ENCODE measurements at regions of chr12 and their contacts with region 1.

Region 1: DNA sequence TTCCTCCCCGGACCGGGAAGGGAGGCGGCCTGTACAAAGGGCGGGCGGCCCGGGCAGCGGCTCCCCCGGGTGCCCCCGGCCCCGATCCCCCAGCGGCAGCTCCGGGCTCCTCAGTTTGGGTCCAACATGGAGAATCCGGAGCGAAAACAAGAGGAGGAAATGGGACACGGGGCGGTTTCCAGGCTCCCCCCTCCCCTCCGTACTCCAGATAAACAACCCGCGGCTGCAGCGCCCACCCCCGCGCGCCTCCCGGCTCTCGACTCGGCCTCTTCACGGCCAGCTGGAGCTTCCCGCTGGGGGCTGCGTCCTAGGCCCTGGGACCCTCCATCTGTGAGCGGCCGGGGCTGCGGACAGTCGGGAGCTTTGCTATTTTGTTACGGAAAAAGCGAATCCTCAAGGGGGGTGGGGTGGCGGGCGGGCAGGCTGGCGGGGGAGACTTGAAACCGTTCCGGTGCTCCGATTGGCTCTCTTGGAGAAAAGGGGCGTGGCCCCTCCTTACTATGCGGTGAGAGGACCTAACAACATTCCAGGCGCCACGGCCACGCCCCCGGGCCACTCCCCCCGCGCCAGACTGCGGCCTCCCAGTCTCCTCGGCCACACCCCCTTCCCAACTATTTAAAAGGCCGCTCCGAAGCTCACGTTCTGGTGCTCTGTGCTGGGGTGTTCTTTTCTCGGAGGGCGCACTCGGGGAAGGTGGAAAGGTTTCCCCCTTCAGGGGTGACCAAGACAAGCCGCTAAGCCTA is at the start of gene CTDSP2:
- DNase-seq: peak; percentile 91
- ATAC-seq: peak; percentile 70
- H3K4me3 ChIP-seq: peak within 1 kb of the TSS; percentile 48 to 98 (median 93)
- H3K4me3 Mint-ChIP-seq: peak within 1 kb of the TSS; percentile 84
- H3K27ac ChIP-seq: peak within 1 kb of the TSS; percentile 75 to 84
- H3K27ac Mint-ChIP-seq: peak within 1 kb of the TSS; percentile 90
- H3K4me1 ChIP-seq: peaks cover 43 to 52% of the 10 kb centered on the region in 2 donors
- H3K4me1 Mint-ChIP-seq: peaks cover 47% of the 10 kb centered on the region
- H3K27me3 ChIP-seq: peaks cover 0 to 7% (median 1%) of the 10 kb centered on the region in 4 experiments
- H3K27me3 Mint-ChIP-seq: peaks cover 9% of the 10 kb centered on the region
- CTCF ChIP-seq: no peak
- total RNA-seq, gene CTDSP2: 203 and 209 TPM in 2 replicates

Region 2: GRCh38 chr12:57771708-57772428 is 74.9 kb before region 1 on chr12 and contains the start of gene METTL1:
- CTCF ChIA-PET with region 1: no interaction called
- POLR2A ChIA-PET with region 1: no interaction called
- intact Hi-C with region 1: loop called (anchors 1 kb)
- DNase-seq: peak; percentile 94
- ATAC-seq: peak; percentile 91
- H3K4me3 ChIP-seq: peak within 1 kb of the TSS; percentile 70 to 96 (median 91)
- H3K4me3 Mint-ChIP-seq: peak within 1 kb of the TSS; percentile 96
- H3K27ac ChIP-seq: peak within 1 kb of the TSS; percentile 59 to 81
- H3K27ac Mint-ChIP-seq: peak within 1 kb of the TSS; percentile 91
- H3K4me1 ChIP-seq: peaks cover 15 to 24% of the 10 kb centered on the region in 2 donors
- H3K4me1 Mint-ChIP-seq: peaks cover 16% of the 10 kb centered on the region
- H3K27me3 ChIP-seq: peaks cover 0 to 9% (median 7%) of the 10 kb centered on the region in 4 experiments
- H3K27me3 Mint-ChIP-seq: no peaks in the 10 kb centered on the region
- CTCF ChIP-seq: no peak
- total RNA-seq, gene METTL1: 8.5 and 9.2 TPM in 2 replicates

Region 3: GRCh38 chr12:57782608-57783465 is 63.9 kb before region 1 on chr12 and contains the start of gene TSFM:
- CTCF ChIA-PET with region 1: interaction called, 3 read pairs
- POLR2A ChIA-PET with region 1: no interaction called
- intact Hi-C with region 1: loop called (anchors 1 kb)
- DNase-seq: peak; percentile 96
- ATAC-seq: peak; percentile 99
- H3K4me3 ChIP-seq: peak within 1 kb of the TSS; percentile 83 to 100 (median 98)
- H3K4me3 Mint-ChIP-seq: peak within 1 kb of the TSS; percentile 100
- H3K27ac ChIP-seq: peak within 1 kb of the TSS; percentile 45 to 77
- H3K27ac Mint-ChIP-seq: peak within 1 kb of the TSS; percentile 96
- H3K4me1 ChIP-seq: peaks cover 9 to 17% of the 10 kb centered on the region in 2 donors
- H3K4me1 Mint-ChIP-seq: peaks cover 18% of the 10 kb centered on the region
- H3K27me3 ChIP-seq: no peaks in the 10 kb centered on the region
- H3K27me3 Mint-ChIP-seq: no peaks in the 10 kb centered on the region
- CTCF ChIP-seq: peak; percentile 94
- total RNA-seq, gene TSFM: 20.6 and 20.9 TPM in 2 replicates

Region 4: DNA sequence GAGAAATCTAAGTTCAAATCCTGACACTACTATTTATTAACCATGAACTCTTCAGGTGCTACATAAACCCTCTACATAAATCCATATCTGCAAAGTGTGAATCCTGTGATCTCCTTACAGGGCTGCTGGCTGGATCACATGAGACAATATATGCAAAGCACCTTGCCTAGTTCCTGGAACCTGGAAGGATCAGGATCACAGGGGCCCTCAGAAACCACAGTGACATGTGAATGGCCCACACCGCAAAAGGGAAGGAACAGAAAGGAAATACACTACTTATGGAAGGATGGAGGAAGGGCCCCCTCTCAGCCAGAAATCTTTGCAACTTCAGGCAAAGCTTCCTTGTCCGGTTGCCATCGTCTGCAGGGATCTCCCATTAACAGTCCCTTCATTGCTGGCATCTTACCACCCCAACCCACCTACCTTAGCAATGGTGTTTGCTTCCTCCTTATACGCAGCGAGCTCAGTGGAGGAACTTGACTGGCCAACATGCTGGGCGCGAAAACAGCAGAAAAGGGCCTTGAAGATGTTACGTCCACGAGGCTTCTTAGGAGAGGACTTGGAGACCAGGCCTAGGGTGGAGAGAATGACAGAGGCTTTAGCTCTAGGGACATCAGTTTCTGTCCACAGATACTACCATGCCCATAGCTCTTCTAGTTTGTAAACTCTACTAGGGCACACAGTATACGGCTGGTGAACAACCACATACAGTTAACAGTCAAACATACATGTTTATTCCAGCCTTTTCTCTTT is 17.5 kb before region 1 on chr12:
- CTCF ChIA-PET with region 1: interaction called, 50 read pairs
- POLR2A ChIA-PET with region 1: no interaction called
- intact Hi-C with region 1: loop called (anchors 2 kb)
- DNase-seq: no peak
- ATAC-seq: no peak
- H3K4me3 ChIP-seq: no peak overlapping the region
- H3K4me3 Mint-ChIP-seq: no peak overlapping the region
- H3K27ac ChIP-seq: no peak overlapping the region
- H3K27ac Mint-ChIP-seq: no peak overlapping the region
- H3K4me1 ChIP-seq: peaks cover 30 to 35% of the 10 kb centered on the region in 2 donors
- H3K4me1 Mint-ChIP-seq: peaks cover 35% of the 10 kb centered on the region
- H3K27me3 ChIP-seq: no peaks in the 10 kb centered on the region
- H3K27me3 Mint-ChIP-seq: no peaks in the 10 kb centered on the region
- CTCF ChIP-seq: no peak

Region 5: GRCh38 chr12:57836442-57837375 is 10.0 kb before region 1 on chr12:
- CTCF ChIA-PET with region 1: interaction called, 50 read pairs
- POLR2A ChIA-PET with region 1: interaction called, 11 read pairs
- intact Hi-C with region 1: loop called (anchors 1 kb)
- DNase-seq: peak; percentile 63
- ATAC-seq: peak; percentile 29
- H3K4me3 ChIP-seq: peak overlapping the region in 4 of 5 experiments; percentile 3 to 38 (median 12)
- H3K4me3 Mint-ChIP-seq: peak overlapping the region; percentile 79
- H3K27ac ChIP-seq: peak overlapping the region; percentile 62 to 81
- H3K27ac Mint-ChIP-seq: peak overlapping the region; percentile 87
- H3K4me1 ChIP-seq: peaks cover 94 to 99% of the 10 kb centered on the region in 2 donors
- H3K4me1 Mint-ChIP-seq: peaks cover 93% of the 10 kb centered on the region
- H3K27me3 ChIP-seq: no peaks in the 10 kb centered on the region
- H3K27me3 Mint-ChIP-seq: no peaks in the 10 kb centered on the region
- CTCF ChIP-seq: no peak

Region 6: DNA sequence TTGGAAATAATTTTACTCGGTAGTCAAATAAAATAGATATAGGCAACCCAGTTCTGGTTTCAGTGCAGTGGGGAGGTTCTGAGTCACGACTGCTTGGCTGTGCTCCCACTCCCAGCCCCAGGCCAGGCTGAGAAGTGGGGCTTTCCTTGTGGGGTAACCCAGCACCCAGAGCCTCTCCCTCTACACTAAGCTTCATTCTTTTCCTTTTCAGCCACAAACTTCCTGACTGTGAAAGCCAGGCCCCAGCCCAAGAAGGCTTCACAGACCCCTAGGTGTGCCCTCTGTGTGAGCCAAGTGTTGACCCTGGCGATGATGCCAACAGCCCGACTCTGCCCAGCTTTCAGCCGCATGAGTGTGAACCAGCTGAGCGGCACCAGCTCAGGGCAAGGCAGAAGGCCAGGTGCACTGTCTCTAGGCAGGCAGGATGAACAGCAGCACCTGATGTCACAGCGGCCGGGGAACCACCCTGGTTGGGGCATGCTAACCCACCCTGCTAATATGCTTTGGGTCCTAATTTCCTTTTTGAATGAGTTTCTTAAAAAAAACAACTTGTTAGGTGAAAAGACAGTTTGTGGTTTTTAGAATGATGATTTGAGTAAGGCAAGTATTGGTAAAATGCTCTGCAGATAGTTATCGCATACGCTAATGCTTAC is 52.4 kb after region 1 on chr12:
- CTCF ChIA-PET with region 1: interaction called, 36 read pairs
- POLR2A ChIA-PET with region 1: interaction called, 11 read pairs
- intact Hi-C with region 1: loop called (anchors 1 kb)
- DNase-seq: peak; percentile 93
- ATAC-seq: peak; percentile 82
- H3K4me3 ChIP-seq: peak overlapping the region in 3 of 5 experiments; percentile 29 to 39 (median 34)
- H3K4me3 Mint-ChIP-seq: peak overlapping the region; percentile 88
- H3K27ac ChIP-seq: peak overlapping the region; percentile 96 to 97
- H3K27ac Mint-ChIP-seq: peak overlapping the region; percentile 100
- H3K4me1 ChIP-seq: peaks cover 57 to 60% of the 10 kb centered on the region in 2 donors
- H3K4me1 Mint-ChIP-seq: peaks cover 58% of the 10 kb centered on the region
- H3K27me3 ChIP-seq: no peaks in the 10 kb centered on the region
- H3K27me3 Mint-ChIP-seq: no peaks in the 10 kb centered on the region
- CTCF ChIP-seq: no peak

Region 7: DNA sequence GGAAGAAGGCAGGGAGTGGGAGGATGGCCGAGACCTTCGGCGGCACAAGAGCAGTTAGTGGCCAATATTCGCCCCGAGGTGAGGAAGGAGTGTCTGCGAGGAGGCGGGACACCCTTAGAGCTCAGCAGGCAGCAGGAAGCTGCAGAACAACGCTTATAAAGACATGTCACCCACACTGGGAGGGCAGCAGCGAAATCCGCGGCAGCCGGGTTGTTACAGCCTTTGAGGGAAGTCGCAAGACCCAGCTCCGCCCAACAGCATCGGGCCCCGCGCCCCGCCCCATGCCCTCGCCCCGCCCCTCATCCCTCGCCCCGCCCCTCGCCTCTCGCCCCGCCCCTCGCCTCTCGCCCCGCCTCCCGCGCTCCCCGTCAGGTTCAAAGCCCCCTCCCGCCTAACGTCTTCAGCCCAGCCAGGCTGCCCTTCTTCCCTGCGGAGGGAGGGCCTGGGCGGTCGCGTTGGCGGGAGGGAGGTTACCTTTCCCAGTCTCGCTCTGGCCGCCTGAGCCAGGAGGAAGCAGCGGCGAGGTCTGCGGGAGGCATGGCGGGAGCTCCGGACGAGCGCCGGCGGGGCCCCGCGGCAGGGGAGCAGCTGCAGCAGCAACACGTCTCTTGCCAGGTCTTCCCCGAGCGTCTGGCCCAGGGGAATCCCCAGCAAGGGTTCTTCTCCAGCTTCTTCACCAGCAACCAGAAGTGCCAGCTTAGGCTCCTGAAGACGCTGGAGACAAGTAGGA is 94.6 kb after region 1 on chr12 and contains the start of gene ATP23:
- CTCF ChIA-PET with region 1: no interaction called
- POLR2A ChIA-PET with region 1: no interaction called
- intact Hi-C with region 1: loop called (anchors 1 kb)
- DNase-seq: peak; percentile 94
- ATAC-seq: peak; percentile 91
- H3K4me3 ChIP-seq: peak within 1 kb of the TSS; percentile 71 to 89 (median 82)
- H3K4me3 Mint-ChIP-seq: peak within 1 kb of the TSS; percentile 99
- H3K27ac ChIP-seq: peak within 1 kb of the TSS; percentile 77 to 91
- H3K27ac Mint-ChIP-seq: peak within 1 kb of the TSS; percentile 97
- H3K4me1 ChIP-seq: peaks cover 15 to 19% of the 10 kb centered on the region in 2 donors
- H3K4me1 Mint-ChIP-seq: peaks cover 28% of the 10 kb centered on the region
- H3K27me3 ChIP-seq: no peaks in the 10 kb centered on the region
- H3K27me3 Mint-ChIP-seq: no peaks in the 10 kb centered on the region
- CTCF ChIP-seq: no peak
- total RNA-seq, gene ATP23: 6.2 and 6.5 TPM in 2 replicates

Region 8: GRCh38 chr12:58051378-58051777 is 204.6 kb after region 1 on chr12:
- CTCF ChIA-PET with region 1: no interaction called
- POLR2A ChIA-PET with region 1: no interaction called
- intact Hi-C with region 1: no loop called
- DNase-seq: no peak
- ATAC-seq: no peak
- H3K4me3 ChIP-seq: no peak overlapping the region
- H3K4me3 Mint-ChIP-seq: no peak overlapping the region
- H3K27ac ChIP-seq: no peak overlapping the region
- H3K27ac Mint-ChIP-seq: no peak overlapping the region
- H3K4me1 ChIP-seq: no peaks in the 10 kb centered on the region
- H3K4me1 Mint-ChIP-seq: no peaks in the 10 kb centered on the region
- H3K27me3 ChIP-seq: peaks cover 0 to 2% (median 0%) of the 10 kb centered on the region in 4 experiments
- H3K27me3 Mint-ChIP-seq: peaks cover 9% of the 10 kb centered on the region
- CTCF ChIP-seq: no peak

Measured in B cell (primary cell).